ENCODE measurements at regions of chr4 and their contacts with region 1.

Region 1: DNA sequence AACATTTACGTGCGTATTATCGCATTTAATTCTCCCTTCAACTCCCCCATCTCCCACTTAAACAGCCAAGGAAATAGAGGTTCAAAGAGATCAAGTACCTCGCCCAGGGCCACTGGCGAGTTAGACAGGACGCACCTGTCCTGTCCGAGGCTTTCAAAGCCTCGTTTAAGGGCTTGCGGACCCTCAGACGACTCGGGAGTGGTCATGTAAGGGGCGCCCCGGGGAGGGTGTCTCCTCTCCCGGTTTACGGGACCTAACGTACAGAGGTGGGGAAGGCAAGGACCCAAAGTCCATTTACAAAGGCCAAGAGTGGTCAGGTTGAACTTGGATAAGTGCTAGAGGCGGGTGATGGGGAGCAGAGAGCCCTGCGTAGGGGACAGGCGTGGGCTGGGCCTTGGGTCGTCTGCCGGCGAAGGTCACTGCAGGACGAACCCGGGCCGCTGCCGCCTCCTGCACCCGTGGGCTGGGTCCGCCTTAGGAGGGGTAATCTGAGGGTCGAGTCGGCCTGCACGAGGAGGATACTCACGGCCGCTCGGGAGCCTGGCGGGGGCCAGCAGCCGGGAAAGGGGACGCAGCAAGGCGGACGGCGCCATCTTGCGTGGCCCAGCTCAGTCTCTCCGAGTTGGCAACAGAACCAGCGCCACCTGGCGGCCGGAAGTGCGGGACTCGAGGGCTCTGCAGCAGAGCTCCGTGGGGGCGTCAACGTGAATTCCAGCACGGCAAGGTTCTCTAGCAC is 5.9 kb upstream of the NAA15 start:
- DNase-seq: peak; percentile 99
- H3K4me3 ChIP-seq: peak overlapping the region; percentile 77 to 79
- H3K27ac ChIP-seq: peak overlapping the region; percentile 82 to 88
- H3K4me1 ChIP-seq: peaks cover 16% of the 10 kb centered on the region
- H3K27me3 ChIP-seq: no peaks in the 10 kb centered on the region
- CTCF ChIP-seq: peak; percentile 88 to 95 (median 93)
- POLR2A ChIP-seq: no peak

Region 2: GRCh38 chr4:139115226-139115625 is 180.1 kb before region 1 on chr4:
- intact Hi-C with region 1: no loop called
- DNase-seq: no peak
- H3K4me3 ChIP-seq: peak overlapping the region in 1 of 2 donors; percentile 21
- H3K27ac ChIP-seq: no peak overlapping the region
- H3K4me1 ChIP-seq: no peaks in the 10 kb centered on the region
- H3K27me3 ChIP-seq: no peaks in the 10 kb centered on the region
- CTCF ChIP-seq: no peak
- POLR2A ChIP-seq: no peak

Region 3: DNA sequence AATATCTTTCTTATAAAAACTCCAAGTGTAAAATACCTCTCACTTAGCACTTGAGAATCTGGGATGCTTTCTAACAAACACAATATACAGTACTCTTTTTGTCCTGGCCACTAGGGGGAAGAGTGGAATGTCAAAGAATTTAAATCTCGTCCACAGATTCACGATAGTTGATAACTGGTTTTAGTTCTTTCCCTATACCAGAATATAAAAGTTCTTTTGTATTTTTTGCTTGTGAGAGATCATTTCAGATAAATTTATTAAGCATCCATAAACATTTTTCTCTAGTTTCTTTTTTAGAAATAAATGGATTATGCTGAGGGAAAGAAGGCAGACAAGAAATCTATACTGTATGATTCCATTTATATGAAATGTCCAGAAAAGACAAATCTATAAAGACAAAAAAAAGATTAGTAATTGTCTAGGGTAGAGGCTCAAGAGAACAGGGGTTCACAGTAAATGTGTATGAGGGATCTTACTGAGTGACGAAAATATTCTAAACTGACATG is 65.8 kb before region 1 on chr4:
- intact Hi-C with region 1: loop called (anchors 5 kb)
- DNase-seq: peak; percentile 20
- H3K4me3 ChIP-seq: no peak overlapping the region
- H3K27ac ChIP-seq: no peak overlapping the region
- H3K4me1 ChIP-seq: no peaks in the 10 kb centered on the region
- H3K27me3 ChIP-seq: no peaks in the 10 kb centered on the region
- CTCF ChIP-seq: peak; percentile 49 to 75 (median 72)
- POLR2A ChIP-seq: no peak

Region 4: DNA sequence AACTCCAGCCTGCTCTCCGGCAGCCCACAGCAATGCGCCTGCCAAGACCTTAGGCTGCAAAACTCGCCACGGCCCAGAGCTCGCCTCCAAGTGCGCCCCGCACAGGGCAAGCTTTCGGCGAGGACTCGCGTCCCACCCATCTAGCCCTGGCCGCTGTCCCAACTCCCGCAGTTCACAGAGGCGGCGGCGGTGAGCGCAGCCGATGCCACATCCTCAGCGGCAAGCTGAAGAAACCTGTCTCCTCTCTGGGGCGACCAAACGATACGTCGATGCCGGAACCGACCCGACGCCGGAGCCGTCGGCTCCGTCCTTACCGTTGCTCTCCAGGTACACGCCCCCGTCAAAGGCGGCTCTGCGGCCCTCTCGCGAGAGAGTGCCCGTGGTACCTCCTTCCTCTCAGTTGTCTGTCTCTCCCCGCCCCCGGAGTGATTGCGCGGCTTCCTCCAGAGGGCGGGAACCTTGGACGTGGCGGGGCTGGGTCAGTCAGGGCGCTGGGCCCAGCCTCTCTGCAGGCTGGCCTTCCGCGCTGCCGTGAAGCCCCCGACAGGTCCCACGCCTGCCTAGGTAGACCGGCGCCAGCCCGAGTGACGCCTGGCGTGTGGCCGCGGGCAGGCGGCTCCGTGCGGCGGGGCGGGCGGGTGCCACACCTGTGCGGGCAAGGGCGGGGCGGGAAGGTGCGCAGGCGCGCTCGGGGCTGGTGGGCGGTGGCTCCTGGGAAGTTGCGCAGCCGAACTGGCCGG is 158.2 kb after region 1 on chr4:
- intact Hi-C with region 1: loop called (anchors 10 kb)
- DNase-seq: peak; percentile 98
- H3K4me3 ChIP-seq: peak overlapping the region; percentile 92 to 93
- H3K27ac ChIP-seq: peak overlapping the region; percentile 95 to 98
- H3K4me1 ChIP-seq: peaks cover 29% of the 10 kb centered on the region
- H3K27me3 ChIP-seq: no peaks in the 10 kb centered on the region
- CTCF ChIP-seq: peak in 1 of 3 experiments; percentile 10
- POLR2A ChIP-seq: peak; percentile 21

Measured in testis (tissue), 5 donors.